Breast epithelium (tissue), 4 donors: ENCODE measurements at regions of chr1 and their contacts with region 1.

Region 1: GRCh38 chr1:53530075-53530474 is 70.9 kb downstream of the DMRTB1 start:
- DNase-seq: no peak
- H3K4me3 ChIP-seq: no peak overlapping the region
- H3K27ac ChIP-seq: no peak overlapping the region
- H3K4me1 ChIP-seq: peaks cover 0 to 3% of the 10 kb centered on the region in 2 donors
- H3K27me3 ChIP-seq: no peaks in the 10 kb centered on the region
- CTCF ChIP-seq: no peak
- POLR2A ChIP-seq: no peak

Region 2: DNA sequence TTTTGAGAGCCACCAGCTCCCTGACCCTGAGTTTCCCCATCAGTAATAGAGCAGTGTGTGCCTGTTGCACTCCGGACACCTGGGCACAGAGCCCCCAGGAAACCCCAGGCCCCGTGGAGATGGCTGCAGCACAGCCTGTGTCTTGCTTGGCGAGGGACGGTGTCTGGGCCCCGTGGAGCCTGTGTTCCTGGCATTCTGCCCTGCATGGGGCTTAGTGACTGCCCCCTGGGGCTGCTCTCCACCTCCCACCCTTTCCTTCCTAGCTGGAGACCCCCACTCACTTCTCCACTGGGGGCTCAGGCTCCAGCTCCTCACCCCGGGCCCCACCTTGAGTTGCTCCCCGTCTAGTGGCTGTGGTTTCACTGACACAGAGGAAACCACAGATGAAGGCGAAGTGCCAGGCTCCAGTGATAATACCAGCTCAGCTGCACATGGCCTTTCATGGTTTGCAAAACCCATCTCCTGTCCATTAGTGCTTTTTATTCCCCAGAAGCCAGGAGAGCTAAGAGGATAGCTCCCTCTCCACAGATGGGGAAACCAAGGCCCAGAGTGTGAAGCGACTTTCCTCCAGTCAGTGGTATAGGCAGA is 31.4 kb before region 1 on chr1:
- intact Hi-C with region 1: loop called (anchors 1 kb)
- DNase-seq: no peak
- H3K4me3 ChIP-seq: no peak overlapping the region
- H3K27ac ChIP-seq: no peak overlapping the region
- H3K4me1 ChIP-seq: no peaks in the 10 kb centered on the region
- H3K27me3 ChIP-seq: peaks cover 0 to 13% of the 10 kb centered on the region in 2 donors
- CTCF ChIP-seq: no peak
- POLR2A ChIP-seq: no peak

Region 3: GRCh38 chr1:54615531-54616279 is 1085.6 kb after region 1 on chr1:
- intact Hi-C with region 1: no loop called
- DNase-seq: no peak
- H3K4me3 ChIP-seq: no peak overlapping the region
- H3K27ac ChIP-seq: no peak overlapping the region
- H3K4me1 ChIP-seq: no peaks in the 10 kb centered on the region
- H3K27me3 ChIP-seq: no peaks in the 10 kb centered on the region
- CTCF ChIP-seq: no peak
- POLR2A ChIP-seq: no peak